ENCODE measurements at regions of chr19 and their contacts with region 1.

Region 1: GRCh38 chr19:10580979-10581631 is 6.0 kb downstream of the AP1M2 start:
- DNase-seq: peak; percentile 87 to 97 (median 91)
- ATAC-seq: peak; percentile 99
- H3K4me3 ChIP-seq: no peak overlapping the region
- H3K4me1 ChIP-seq: no peaks in the 10 kb centered on the region
- CTCF ChIP-seq: peak; percentile 98

Region 2: DNA sequence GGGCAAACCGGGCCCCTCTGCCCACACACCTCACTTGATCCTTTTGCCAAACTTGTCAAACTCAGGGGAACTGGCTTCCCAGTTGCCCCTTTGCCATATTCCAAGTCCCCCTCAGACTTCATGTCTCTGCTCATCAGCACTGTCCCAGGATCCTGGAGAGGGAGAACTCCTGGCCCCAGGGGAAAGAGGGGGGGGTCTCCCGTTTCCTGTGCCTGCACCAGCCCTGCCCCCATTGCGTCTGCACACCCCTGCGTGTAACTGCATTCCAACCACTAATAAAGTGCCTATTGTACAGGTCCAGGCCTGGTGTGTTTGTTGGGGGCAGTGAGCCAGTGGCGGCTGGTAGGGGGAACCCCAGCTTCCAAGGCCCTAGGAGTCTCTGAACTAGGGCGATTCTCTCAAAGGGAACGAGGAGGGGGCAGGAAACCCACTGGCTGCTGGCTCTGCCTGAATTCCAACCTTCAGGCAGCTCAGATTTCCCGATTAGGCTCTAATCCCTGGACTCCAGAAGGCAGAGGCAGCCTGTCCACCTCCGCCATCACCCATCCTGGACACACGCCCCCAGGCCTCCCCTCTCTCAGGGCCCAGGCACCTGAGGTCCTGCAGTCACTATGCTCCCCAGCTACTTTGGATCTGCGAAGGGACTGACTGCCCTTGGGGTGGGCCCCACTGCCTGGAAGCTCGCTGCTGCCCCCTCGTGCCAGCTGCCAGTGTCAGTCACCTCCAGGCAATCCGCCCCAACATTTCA is 63.3 kb after region 1 on chr19:
- intact Hi-C with region 1: loop called (anchors 5 kb)
- DNase-seq: peak; percentile 85 to 91 (median 88)
- ATAC-seq: peak; percentile 94
- H3K4me3 ChIP-seq: no peak overlapping the region
- H3K4me1 ChIP-seq: peaks cover 5% of the 10 kb centered on the region
- CTCF ChIP-seq: peak; percentile 65

Measured in mucosa of descending colon (tissue), 3 donors.